ENCODE measurements at regions of chr17 and their contacts with region 1.

Region 1: DNA sequence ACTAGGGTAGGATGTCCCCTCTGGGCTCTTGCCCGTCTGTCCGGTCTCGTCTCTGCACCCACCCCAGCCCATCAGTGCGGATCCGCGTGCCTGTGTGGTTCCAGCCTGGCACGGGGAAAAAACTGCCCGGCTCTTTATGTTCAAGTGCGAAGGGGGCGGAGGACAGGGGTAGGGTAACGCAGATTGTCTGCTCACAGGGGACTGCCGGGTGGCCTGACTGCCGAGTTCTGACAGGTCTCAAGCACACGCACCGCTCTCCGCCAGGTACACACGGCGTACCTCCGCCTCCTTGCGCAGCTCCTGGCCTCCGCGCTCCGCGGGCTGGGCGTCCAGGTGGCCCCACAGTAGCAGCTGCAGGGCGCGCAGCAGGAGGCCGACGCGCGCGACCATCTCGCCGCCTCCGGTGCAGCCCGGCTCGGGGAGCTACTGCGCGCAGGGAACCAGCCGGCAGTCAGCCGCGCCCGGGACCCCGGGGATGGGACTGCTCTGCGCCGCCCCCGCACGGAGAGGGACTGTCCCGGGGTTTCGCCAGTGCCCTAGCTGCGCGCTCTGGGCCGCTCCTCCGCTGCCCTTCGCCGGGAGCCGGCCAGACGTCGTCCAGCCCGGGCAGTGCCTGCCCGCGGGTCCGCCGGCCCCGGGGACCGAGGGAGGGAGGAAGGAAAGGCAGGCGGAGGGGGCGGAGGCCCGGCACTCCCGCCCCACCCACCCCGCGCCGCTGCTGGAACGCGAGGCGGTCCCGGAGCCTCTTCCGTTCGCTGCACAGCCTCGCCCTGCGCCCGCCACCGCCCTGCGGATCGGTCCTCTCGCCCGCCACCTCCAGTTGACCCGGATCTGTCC is at the start of gene MMP28:
- DNase-seq: peak; percentile 42
- ATAC-seq: peak; percentile 83
- H3K4me3 Mint-ChIP-seq: peak within 1 kb of the TSS; percentile 79
- H3K27ac Mint-ChIP-seq: no peak within 1 kb of the TSS
- H3K4me1 Mint-ChIP-seq: peaks cover 17% of the 10 kb centered on the region
- H3K27me3 Mint-ChIP-seq: peaks cover 43% of the 10 kb centered on the region
- CTCF ChIP-seq: no peak
- total RNA-seq, gene MMP28: 0.59 TPM in 1 of 2 replicates, not detected in the other

Region 2: GRCh38 chr17:35808962-35809854 is 14.0 kb after region 1 on chr17 and contains the start of gene TAF15:
- CTCF ChIA-PET with region 1: interaction called, 18 read pairs
- POLR2A ChIA-PET with region 1: interaction called, 15 read pairs
- intact Hi-C with region 1: loop called (anchors 1 kb)
- DNase-seq: peak; percentile 91
- ATAC-seq: peak; percentile 88
- H3K4me3 Mint-ChIP-seq: peak within 1 kb of the TSS; percentile 93
- H3K27ac Mint-ChIP-seq: peak within 1 kb of the TSS; percentile 100
- H3K4me1 Mint-ChIP-seq: peaks cover 55% of the 10 kb centered on the region
- H3K27me3 Mint-ChIP-seq: no peaks in the 10 kb centered on the region
- CTCF ChIP-seq: no peak
- total RNA-seq, gene TAF15: 224 and 243 TPM in 2 replicates

Measured in activated B cell treated with CpG ODN at 0.5 μM for 24 hours (primary cell).